ENCODE measurements at regions of chrX and their contacts with region 1.

Region 1: DNA sequence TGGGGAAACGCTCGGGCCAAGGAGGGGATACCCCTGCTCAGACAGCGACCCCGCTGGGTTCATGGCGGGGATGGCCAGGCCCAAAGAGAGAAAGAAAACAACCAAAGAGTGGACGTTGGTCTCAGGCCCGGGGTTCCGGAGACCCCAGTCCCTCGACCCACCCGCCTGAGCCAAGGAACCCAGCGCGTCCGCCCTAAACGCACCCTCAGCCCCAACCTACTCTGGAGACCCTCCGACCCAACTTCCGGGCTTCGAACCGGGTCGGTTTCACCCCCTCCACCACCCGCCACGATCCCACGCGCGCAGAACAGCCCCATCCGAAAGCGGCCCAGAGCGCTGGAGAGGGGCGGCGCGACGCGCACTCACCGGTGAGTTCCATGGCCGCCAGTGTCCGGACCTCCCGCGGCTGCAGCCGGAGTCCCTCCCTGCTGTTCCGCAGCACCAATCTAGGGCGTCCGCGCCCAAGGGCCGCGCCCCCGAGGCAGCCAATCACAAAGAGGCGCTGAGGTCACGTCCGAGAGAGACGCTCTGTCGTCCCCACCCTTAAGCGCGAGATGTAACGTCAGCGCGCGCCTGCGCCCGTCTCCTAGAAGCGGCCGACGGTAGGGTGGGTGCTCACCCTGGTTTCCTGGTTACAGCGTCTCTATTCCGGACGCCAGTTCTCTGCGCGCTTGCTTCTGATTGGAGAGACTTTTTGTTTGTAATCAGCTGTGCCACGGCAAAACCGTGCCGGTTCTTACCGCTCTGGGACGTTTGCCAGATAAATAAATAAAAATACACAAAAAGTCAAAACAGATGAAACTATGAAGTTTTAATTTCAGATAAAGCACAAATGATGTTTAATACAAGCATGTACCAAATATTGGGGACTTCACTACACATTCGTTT is at the start of gene PIGA:
- DNase-seq: peak; percentile 97
- H3K4me3 ChIP-seq: peak within 1 kb of the TSS; percentile 39 to 89 (median 60)
- H3K27ac ChIP-seq: peak within 1 kb of the TSS; percentile 81
- H3K4me1 ChIP-seq: peaks cover 4% of the 10 kb centered on the region
- H3K27me3 ChIP-seq: peaks cover 5 to 6% of the 10 kb centered on the region in 2 experiments
- CTCF ChIP-seq: no peak
- POLR2A ChIP-seq: no peak
- total RNA-seq, gene PIGA: 12.1 TPM in 2 replicates

Region 2: DNA sequence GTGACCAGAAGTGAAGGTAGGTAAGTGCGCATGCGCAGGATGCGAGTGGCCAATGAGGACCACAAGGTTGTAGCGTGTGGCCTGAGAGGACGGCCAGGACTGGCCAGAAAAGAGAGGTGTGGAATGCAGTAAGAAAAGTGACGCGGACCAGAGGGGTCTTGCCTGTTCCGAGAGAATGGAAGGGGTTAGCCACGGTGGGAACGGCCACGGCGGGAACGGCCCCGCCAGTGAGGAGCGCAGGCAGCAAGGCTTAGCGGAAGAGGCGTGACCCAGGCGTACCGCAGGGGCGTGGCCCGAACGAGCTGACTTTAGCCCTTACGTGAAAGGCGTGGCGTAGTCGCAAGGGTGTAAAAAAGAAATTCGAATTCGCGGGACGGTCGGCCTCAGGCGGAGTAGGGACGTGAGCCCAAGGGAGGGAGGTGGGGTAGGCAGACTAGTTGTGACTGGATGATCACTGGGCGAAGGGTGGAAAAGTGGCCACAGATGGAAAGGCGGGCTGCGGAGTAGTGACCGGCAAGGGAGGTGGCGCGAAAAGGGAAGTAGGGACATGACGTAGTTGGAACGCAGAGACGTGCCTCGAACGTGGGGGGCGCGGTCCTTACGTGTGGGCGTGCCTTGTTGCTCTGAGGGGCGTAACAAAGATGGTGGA is 339.6 kb after region 1 on chrX:
- CTCF ChIA-PET with region 1: no interaction called
- POLR2A ChIA-PET with region 1: no interaction called
- dilution Hi-C with region 1: no loop called
- intact Hi-C with region 1: loop called (anchors 1 kb)
- DNase-seq: peak; percentile 93
- H3K4me3 ChIP-seq: peak overlapping the region in 2 of 3 experiments; percentile 71 to 78
- H3K27ac ChIP-seq: peak overlapping the region; percentile 48
- H3K4me1 ChIP-seq: peaks cover 12% of the 10 kb centered on the region
- H3K27me3 ChIP-seq: no peaks in the 10 kb centered on the region
- CTCF ChIP-seq: no peak
- POLR2A ChIP-seq: peak; percentile 24

Measured in endothelial cell of umbilical vein (primary cell).